CD14-positive monocyte (primary cell): ENCODE measurements at regions of chr9 and their contacts with region 1.

Region 1: DNA sequence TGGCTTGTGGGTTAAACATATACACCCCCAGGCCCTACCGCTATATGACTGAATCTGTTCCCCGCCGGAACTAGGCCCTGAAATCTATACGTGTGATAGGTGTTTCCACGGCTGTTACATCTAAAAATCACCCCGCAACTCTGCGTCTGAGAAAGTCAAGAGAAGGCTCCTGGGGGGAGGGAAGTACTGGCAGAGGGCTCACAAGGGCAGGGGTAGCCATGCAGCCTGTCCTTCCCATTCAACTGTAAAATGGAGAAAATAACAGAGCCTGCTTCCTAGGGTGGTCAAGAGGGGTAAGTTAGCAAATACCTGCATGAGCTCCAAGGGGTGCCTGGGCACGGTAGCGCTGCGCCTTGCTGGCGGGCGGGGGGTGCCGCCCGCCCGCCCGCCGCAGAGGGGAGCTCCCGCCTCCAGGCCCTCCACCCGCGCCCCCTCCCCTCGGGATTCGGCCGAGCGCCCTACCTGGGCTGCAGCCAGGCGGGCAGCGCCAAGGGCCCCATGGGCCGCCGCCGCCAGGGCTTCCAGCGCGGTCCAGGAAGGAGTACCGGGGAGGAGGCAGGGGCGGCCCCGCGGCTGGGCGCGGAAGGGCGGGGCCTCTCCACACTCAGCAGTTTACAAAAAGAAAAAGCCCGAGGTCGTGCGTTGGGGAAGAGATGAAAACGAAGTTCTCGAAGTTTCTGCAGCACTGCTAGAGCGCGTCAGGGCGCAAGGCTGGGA is at the start of gene HACD4:
- DNase-seq: peak; percentile 43 to 57 (median 48)
- H3K4me3 ChIP-seq: peak within 1 kb of the TSS; percentile 81 to 96 (median 82)
- H3K4me3 Mint-ChIP-seq: peak within 1 kb of the TSS in 1 of 2 donors; percentile 84
- H3K27ac ChIP-seq: peak within 1 kb of the TSS; percentile 86 to 92
- H3K27ac Mint-ChIP-seq: peak within 1 kb of the TSS in 6 of 7 donors; percentile 13 to 81 (median 74)
- H3K4me1 ChIP-seq: peaks cover 39 to 56% of the 10 kb centered on the region in 2 donors
- H3K4me1 Mint-ChIP-seq: peaks cover 18% of the 10 kb centered on the region
- H3K27me3 ChIP-seq: no peaks in the 10 kb centered on the region
- H3K27me3 Mint-ChIP-seq: peaks cover 0 to 3% (median 0%) of the 10 kb centered on the region in 3 donors
- CTCF ChIP-seq: no peak
- polyA plus RNA-seq, gene HACD4: 23.9 to 28.7 (median 27.5) TPM

Region 2: GRCh38 chr9:20980832-20981455 is 50.3 kb before region 1 on chr9:
- intact Hi-C with region 1: loop called (anchors 5 kb)
- DNase-seq: peak; percentile 70 to 80 (median 73)
- H3K4me3 ChIP-seq: peak overlapping the region in 1 of 3 experiments; percentile 15
- H3K4me3 Mint-ChIP-seq: peak overlapping the region in 1 of 2 donors; percentile 61
- H3K27ac ChIP-seq: peak overlapping the region; percentile 47 to 79
- H3K27ac Mint-ChIP-seq: peak overlapping the region; percentile 62 to 91 (median 85)
- H3K4me1 ChIP-seq: peaks cover 32 to 35% of the 10 kb centered on the region in 2 donors
- H3K4me1 Mint-ChIP-seq: peaks cover 26% of the 10 kb centered on the region
- H3K27me3 ChIP-seq: no peaks in the 10 kb centered on the region
- H3K27me3 Mint-ChIP-seq: peaks cover 0 to 1% (median 0%) of the 10 kb centered on the region in 3 donors
- CTCF ChIP-seq: no peak

Region 3: DNA sequence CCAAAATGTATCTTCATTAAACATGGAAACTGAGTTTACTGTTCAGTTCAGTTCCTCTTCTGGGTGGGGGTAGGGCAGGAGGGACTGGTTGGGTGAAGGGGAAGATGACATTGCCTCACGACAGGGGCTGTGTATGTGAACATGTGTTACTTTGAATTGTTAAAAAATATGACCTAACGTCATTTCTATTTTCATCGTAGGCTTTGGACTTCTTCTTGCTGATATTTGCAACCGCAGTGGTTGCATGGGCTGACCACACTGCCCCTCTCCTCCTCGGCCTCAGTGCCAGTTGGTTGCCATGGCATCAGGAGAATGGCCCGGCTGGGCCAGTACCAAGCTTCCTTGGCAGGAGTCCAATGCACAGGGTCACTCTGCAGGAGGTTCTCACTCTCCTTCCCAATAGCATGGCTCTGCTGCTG is 41.3 kb before region 1 on chr9:
- intact Hi-C with region 1: loop called in 1 of 2 experiments (anchors 5 kb)
- DNase-seq: peak; percentile 53 to 81 (median 64)
- H3K4me3 ChIP-seq: peak overlapping the region in 1 of 3 experiments; percentile 56
- H3K4me3 Mint-ChIP-seq: peak overlapping the region in 1 of 2 donors; percentile 56
- H3K27ac ChIP-seq: peak overlapping the region; percentile 85 to 92
- H3K27ac Mint-ChIP-seq: peak overlapping the region; percentile 72 to 97 (median 96)
- H3K4me1 ChIP-seq: peaks cover 39 to 57% of the 10 kb centered on the region in 2 donors
- H3K4me1 Mint-ChIP-seq: peaks cover 42% of the 10 kb centered on the region
- H3K27me3 ChIP-seq: no peaks in the 10 kb centered on the region
- H3K27me3 Mint-ChIP-seq: peaks cover 0 to under 1% (median 0%) of the 10 kb centered on the region in 3 donors
- CTCF ChIP-seq: no peak

Region 4: GRCh38 chr9:21070171-21070571 is 38.9 kb after region 1 on chr9:
- intact Hi-C with region 1: no loop called
- DNase-seq: peak in 1 of 3 donors; percentile 9
- H3K4me3 ChIP-seq: peak overlapping the region in 1 of 3 experiments; percentile 23
- H3K4me3 Mint-ChIP-seq: peak overlapping the region in 1 of 2 donors; percentile 47
- H3K27ac ChIP-seq: no peak overlapping the region
- H3K27ac Mint-ChIP-seq: no peak overlapping the region
- H3K4me1 ChIP-seq: peaks cover 5 to 8% of the 10 kb centered on the region in 2 donors
- H3K4me1 Mint-ChIP-seq: peaks cover 12% of the 10 kb centered on the region
- H3K27me3 ChIP-seq: no peaks in the 10 kb centered on the region
- H3K27me3 Mint-ChIP-seq: peaks cover 0 to 3% (median 2%) of the 10 kb centered on the region in 3 donors
- CTCF ChIP-seq: peak; percentile 37

Region 5: GRCh38 chr9:21096172-21096900 is 65.1 kb after region 1 on chr9:
- intact Hi-C with region 1: loop called (anchors 5 to 10 kb)
- DNase-seq: peak; percentile 59 to 83 (median 78)
- H3K4me3 ChIP-seq: peak overlapping the region in 2 of 3 experiments; percentile 13 to 56
- H3K4me3 Mint-ChIP-seq: peak overlapping the region; percentile 34 to 62
- H3K27ac ChIP-seq: peak overlapping the region; percentile 26 to 49
- H3K27ac Mint-ChIP-seq: peak overlapping the region; percentile 56 to 86 (median 76)
- H3K4me1 ChIP-seq: peaks cover 25 to 32% of the 10 kb centered on the region in 2 donors
- H3K4me1 Mint-ChIP-seq: peaks cover 34% of the 10 kb centered on the region
- H3K27me3 ChIP-seq: no peaks in the 10 kb centered on the region
- H3K27me3 Mint-ChIP-seq: no peaks in the 10 kb centered on the region
- CTCF ChIP-seq: no peak

Region 6: GRCh38 chr9:21102305-21102704 is 71.1 kb after region 1 on chr9:
- intact Hi-C with region 1: loop called (anchors 5 to 10 kb)
- DNase-seq: no peak
- H3K4me3 ChIP-seq: no peak overlapping the region
- H3K4me3 Mint-ChIP-seq: no peak overlapping the region
- H3K27ac ChIP-seq: no peak overlapping the region
- H3K27ac Mint-ChIP-seq: no peak overlapping the region
- H3K4me1 ChIP-seq: peaks cover 27 to 34% of the 10 kb centered on the region in 2 donors
- H3K4me1 Mint-ChIP-seq: peaks cover 34% of the 10 kb centered on the region
- H3K27me3 ChIP-seq: no peaks in the 10 kb centered on the region
- H3K27me3 Mint-ChIP-seq: no peaks in the 10 kb centered on the region
- CTCF ChIP-seq: no peak